Activated CD4-positive, alpha-beta T cell treated with anti-CD3 and anti-CD28 coated beads, Interleukin-2, amount 10 ng/mL, durations not matched to agents 24 days and 14 days (primary cell): ENCODE measurements at regions of chr10 and their contacts with region 1.

Region 1: GRCh38 chr10:92087750-92088395 is 164.3 kb downstream of the BTAF1 start:
- DNase-seq: peak; percentile 87
- H3K4me3 Mint-ChIP-seq: no peak overlapping the region
- H3K27ac Mint-ChIP-seq: no peak overlapping the region
- H3K4me1 Mint-ChIP-seq: peaks cover 4% of the 10 kb centered on the region
- H3K27me3 Mint-ChIP-seq: no peaks in the 10 kb centered on the region

Region 2: DNA sequence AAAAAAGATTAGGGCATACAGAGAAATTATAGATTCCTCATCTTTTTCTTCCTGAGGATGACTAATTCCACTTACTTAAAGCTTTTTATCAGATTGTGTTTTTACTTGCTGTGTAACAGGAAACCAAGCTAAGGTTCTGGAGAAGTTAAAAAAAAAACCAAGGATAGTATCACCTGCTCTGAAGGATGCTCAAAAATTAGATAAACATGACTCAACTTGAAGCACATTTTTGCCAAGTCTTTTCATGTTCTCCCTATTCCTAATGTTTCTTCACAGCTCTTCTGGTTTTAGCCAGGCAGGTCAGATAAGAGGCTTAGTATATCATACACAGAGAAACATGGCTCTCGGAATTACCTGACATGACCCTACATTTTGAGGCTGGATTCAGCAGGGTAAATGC is 112.7 kb after region 1 on chr10:
- intact Hi-C with region 1: no loop called
- DNase-seq: no peak
- H3K4me3 Mint-ChIP-seq: no peak overlapping the region
- H3K27ac Mint-ChIP-seq: no peak overlapping the region
- H3K4me1 Mint-ChIP-seq: peaks cover 4% of the 10 kb centered on the region
- H3K27me3 Mint-ChIP-seq: no peaks in the 10 kb centered on the region

Region 3: DNA sequence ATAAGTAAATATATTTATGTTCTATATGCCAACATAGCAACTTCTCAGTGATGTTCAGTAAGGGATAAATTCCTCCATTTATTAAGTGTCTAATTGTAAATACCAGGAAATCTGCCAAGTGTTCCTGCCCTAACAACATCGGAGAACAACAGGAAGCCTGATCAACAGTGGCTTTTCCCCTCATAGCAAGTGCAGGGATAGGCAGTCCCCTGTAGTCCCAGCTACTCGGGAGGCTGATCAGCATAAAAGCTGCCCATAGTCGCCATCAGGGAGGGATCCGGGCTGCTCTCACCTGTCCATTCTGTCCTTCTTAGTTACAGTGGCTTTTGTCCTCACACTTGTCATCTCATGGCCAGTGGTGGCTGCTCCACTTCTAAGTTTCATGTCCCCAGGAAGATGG is 344.7 kb after region 1 on chr10:
- intact Hi-C with region 1: loop called (anchors 1 kb)
- DNase-seq: no peak
- H3K4me3 Mint-ChIP-seq: no peak overlapping the region
- H3K27ac Mint-ChIP-seq: no peak overlapping the region
- H3K4me1 Mint-ChIP-seq: no peaks in the 10 kb centered on the region
- H3K27me3 Mint-ChIP-seq: no peaks in the 10 kb centered on the region